ENCODE measurements at regions of chr1 and their contacts with region 1.

Region 1: DNA sequence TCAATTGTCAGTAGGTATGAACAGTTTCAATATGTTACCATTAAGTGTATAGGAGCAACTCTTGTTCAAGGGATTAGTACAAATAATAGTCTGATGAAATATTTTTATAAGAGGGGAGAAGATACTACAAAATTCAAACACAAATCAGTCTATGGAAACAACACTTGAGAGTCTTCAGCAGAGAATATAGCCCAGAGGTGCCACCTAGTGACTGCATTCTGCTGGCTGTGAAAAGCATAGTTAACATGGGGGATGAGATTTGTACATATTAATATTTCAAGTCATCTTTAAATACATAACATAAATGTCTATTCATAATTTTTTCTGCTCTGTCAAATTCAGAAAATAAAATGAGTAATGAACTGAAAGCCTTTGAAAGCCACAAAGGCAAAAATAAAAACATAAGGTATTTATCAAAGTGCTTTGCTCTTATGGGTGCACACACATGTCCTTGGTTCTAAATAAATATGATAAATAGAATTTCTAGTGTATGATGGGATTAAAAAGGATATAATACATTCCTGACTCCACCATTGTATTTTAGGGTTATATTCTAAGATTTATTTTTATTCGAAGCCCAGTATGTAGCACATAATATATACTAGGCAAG is 440.9 kb upstream of the ZRANB2 start:
- DNase-seq: peak in 6 of 10 donors; percentile 34 to 75 (median 46)
- H3K4me3 ChIP-seq: no peak overlapping the region
- H3K27ac ChIP-seq: no peak overlapping the region
- H3K27me3 ChIP-seq: no peaks in the 10 kb centered on the region
- CTCF ChIP-seq: peak; percentile 39 to 92 (median 68)

Region 2: GRCh38 chr1:71094913-71095312 is 426.8 kb before region 1 on chr1:
- intact Hi-C with region 1: loop called in 1 of 2 experiments (anchors 5 kb)
- DNase-seq: no peak
- H3K4me3 ChIP-seq: no peak overlapping the region
- H3K27ac ChIP-seq: no peak overlapping the region
- H3K27me3 ChIP-seq: no peaks in the 10 kb centered on the region
- CTCF ChIP-seq: no peak

Region 3: GRCh38 chr1:71196685-71197084 is 325.1 kb before region 1 on chr1:
- intact Hi-C with region 1: loop called (anchors 5 to 10 kb)
- DNase-seq: no peak
- H3K4me3 ChIP-seq: no peak overlapping the region
- H3K27ac ChIP-seq: no peak overlapping the region
- H3K27me3 ChIP-seq: no peaks in the 10 kb centered on the region
- CTCF ChIP-seq: peak in 55 of 56 donors; percentile 25 to 79 (median 59)

Region 4: GRCh38 chr1:71473331-71473730 is 48.4 kb before region 1 on chr1:
- intact Hi-C with region 1: no loop called
- DNase-seq: no peak
- H3K4me3 ChIP-seq: no peak overlapping the region
- H3K27ac ChIP-seq: no peak overlapping the region
- H3K27me3 ChIP-seq: no peaks in the 10 kb centered on the region
- CTCF ChIP-seq: no peak